ENCODE measurements at regions of chr7 and their contacts with region 1.

Region 1: GRCh38 chr7:143214789-143215679 is 6.8 kb upstream of the TAS2R40 start:
- DNase-seq: peak; percentile 67 to 79 (median 77)
- H3K4me3 ChIP-seq: no peak overlapping the region
- H3K4me3 Mint-ChIP-seq: no peak overlapping the region
- H3K27ac ChIP-seq: no peak overlapping the region
- H3K27ac Mint-ChIP-seq: no peak overlapping the region
- H3K4me1 ChIP-seq: no peaks in the 10 kb centered on the region
- H3K4me1 Mint-ChIP-seq: peaks cover 0 to 1% (median 0%) of the 10 kb centered on the region in 4 donors
- H3K27me3 ChIP-seq: no peaks in the 10 kb centered on the region
- H3K27me3 Mint-ChIP-seq: peaks cover 3% of the 10 kb centered on the region in 2 donors

Region 2: DNA sequence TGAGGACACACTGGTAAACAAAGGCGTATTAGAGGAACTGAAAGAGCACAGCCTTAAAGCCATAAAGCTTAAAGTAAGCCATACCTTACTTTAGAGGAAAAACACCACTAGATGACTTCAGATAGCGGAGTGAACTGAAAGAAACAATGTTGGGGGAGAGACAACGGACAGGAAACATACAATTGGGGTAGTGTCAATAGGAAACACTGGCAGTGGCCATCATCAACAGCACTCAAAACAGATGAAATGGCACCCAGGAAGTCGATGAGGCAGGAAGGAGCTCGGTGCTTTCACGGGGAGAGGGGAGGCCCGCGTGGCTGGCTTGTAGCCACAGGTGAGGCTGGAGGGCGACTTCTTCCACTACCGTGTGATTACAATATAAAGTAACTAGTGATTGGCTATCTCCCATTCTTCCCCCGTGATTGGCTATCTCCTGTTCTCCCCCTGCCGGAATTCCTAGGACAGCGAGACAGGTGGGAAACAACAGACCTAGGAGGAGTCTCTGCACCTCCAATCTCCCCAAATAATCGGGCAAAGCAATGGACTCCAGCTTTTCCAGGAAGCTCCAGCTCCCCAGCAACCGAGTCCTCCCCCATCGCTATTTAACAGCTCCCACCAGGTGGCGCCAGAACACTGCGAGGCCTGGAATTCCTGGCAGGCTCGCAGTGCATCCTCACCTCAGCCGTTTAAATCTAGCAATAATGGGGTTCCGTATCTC is 1239.1 kb before region 1 on chr7:
- CTCF ChIA-PET with region 1: interaction called, 13 read pairs
- POLR2A ChIA-PET with region 1: no interaction called
- intact Hi-C with region 1: loop called (anchors 1 kb)
- DNase-seq: peak; percentile 33 to 54 (median 51)
- H3K4me3 ChIP-seq: peak overlapping the region; percentile 24 to 49
- H3K4me3 Mint-ChIP-seq: peak overlapping the region; percentile 47 to 85 (median 81)
- H3K27ac ChIP-seq: no peak overlapping the region
- H3K27ac Mint-ChIP-seq: peak overlapping the region in 6 of 7 donors; percentile 0 to 86 (median 50)
- H3K4me1 ChIP-seq: peaks cover 9% of the 10 kb centered on the region
- H3K4me1 Mint-ChIP-seq: peaks cover 5 to 18% (median 9%) of the 10 kb centered on the region in 4 donors
- H3K27me3 ChIP-seq: no peaks in the 10 kb centered on the region
- H3K27me3 Mint-ChIP-seq: no peaks in the 10 kb centered on the region

Region 3: DNA sequence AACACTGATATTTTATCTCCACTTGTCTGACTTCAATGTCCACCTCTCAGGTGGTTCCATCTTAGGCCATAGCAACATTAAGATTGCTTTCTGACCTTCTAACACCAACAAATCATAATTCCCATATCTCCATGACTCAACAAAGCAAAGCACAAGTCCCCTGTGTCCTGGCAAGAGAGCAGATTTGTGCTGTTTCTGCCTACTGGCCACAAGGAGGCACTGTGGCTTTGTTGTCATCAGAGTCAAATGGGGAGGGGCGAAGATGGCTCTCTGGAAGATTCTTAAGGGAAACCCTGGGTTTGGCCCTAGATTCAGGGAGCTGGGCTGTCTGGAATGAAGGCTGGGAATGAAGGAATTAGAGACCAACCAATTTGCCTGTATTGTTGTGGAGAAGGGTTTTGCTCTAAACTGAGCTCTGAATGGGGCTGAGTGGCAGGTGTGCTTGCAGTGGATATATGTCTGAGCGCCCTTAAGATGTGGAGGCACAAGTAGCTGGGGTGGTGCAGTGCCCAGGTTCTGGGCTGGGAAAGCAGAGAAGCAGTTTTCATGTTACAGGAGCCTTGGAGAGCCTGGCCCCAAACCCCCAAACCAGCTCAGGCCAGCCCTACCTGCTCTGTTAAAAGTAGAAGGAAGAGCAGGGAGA is 802.4 kb before region 1 on chr7:
- CTCF ChIA-PET with region 1: interaction called, 3 read pairs
- POLR2A ChIA-PET with region 1: no interaction called
- intact Hi-C with region 1: loop called (anchors 1 kb)
- DNase-seq: peak; percentile 38 to 48 (median 41)
- H3K4me3 ChIP-seq: no peak overlapping the region
- H3K4me3 Mint-ChIP-seq: peak overlapping the region in 4 of 8 donors; percentile 8 to 36 (median 24)
- H3K27ac ChIP-seq: no peak overlapping the region
- H3K27ac Mint-ChIP-seq: peak overlapping the region in 4 of 7 donors; percentile 18 to 74 (median 28)
- H3K4me1 ChIP-seq: no peaks in the 10 kb centered on the region
- H3K4me1 Mint-ChIP-seq: peaks cover 1 to 6% (median 3%) of the 10 kb centered on the region in 4 donors
- H3K27me3 ChIP-seq: no peaks in the 10 kb centered on the region
- H3K27me3 Mint-ChIP-seq: no peaks in the 10 kb centered on the region

Region 4: DNA sequence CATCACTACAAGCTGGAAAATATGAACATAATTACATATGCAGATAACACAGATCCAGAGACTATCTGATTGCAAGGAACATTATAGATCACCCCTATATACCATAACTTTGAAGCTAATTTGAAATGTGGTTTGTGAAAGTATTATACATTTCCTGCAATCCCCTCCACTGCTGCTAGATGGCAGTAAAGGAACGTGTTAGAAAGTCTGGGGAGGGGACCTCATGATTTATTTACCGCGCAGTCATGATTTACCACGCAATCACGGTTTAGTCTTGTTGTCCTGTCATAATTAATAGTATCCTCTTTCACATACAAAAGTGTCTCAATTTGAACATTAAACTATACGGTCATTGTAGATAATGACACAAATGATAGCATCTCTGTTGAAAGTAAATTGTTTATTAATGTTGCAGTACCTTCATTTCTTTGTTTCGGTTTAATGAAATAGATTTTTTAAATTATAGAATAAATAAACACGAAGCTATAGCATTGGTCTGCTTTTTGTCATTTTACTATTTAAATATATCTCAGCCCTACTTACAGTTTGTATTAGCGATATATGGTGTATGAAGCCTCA is 611.1 kb before region 1 on chr7:
- CTCF ChIA-PET with region 1: interaction called, 5 read pairs
- POLR2A ChIA-PET with region 1: no interaction called
- intact Hi-C with region 1: loop called (anchors 1 kb)
- DNase-seq: peak; percentile 50 to 59 (median 53)
- H3K4me3 ChIP-seq: no peak overlapping the region
- H3K4me3 Mint-ChIP-seq: peak overlapping the region in 4 of 8 donors; percentile 11 to 58 (median 28)
- H3K27ac ChIP-seq: no peak overlapping the region
- H3K27ac Mint-ChIP-seq: peak overlapping the region in 3 of 7 donors; percentile 13 to 57 (median 24)
- H3K4me1 ChIP-seq: no peaks in the 10 kb centered on the region
- H3K4me1 Mint-ChIP-seq: peaks cover under 1 to 12% (median 5%) of the 10 kb centered on the region in 4 donors
- H3K27me3 ChIP-seq: no peaks in the 10 kb centered on the region
- H3K27me3 Mint-ChIP-seq: no peaks in the 10 kb centered on the region

Region 5: GRCh38 chr7:142880876-142881505 is 334.0 kb before region 1 on chr7:
- CTCF ChIA-PET with region 1: interaction called, 10 read pairs
- POLR2A ChIA-PET with region 1: no interaction called
- intact Hi-C with region 1: no loop called
- DNase-seq: peak; percentile 35 to 57 (median 55)
- H3K4me3 ChIP-seq: no peak overlapping the region
- H3K4me3 Mint-ChIP-seq: no peak overlapping the region
- H3K27ac ChIP-seq: no peak overlapping the region
- H3K27ac Mint-ChIP-seq: no peak overlapping the region
- H3K4me1 ChIP-seq: no peaks in the 10 kb centered on the region
- H3K4me1 Mint-ChIP-seq: peaks cover 0 to 4% (median 0%) of the 10 kb centered on the region in 4 donors
- H3K27me3 ChIP-seq: no peaks in the 10 kb centered on the region
- H3K27me3 Mint-ChIP-seq: peaks cover 2 to 8% of the 10 kb centered on the region in 2 donors

Region 6: GRCh38 chr7:143013893-143014292 is 201.1 kb before region 1 on chr7:
- CTCF ChIA-PET with region 1: interaction called, 291 read pairs
- POLR2A ChIA-PET with region 1: no interaction called
- intact Hi-C with region 1: no loop called
- DNase-seq: no peak
- H3K4me3 ChIP-seq: no peak overlapping the region
- H3K4me3 Mint-ChIP-seq: no peak overlapping the region
- H3K27ac ChIP-seq: no peak overlapping the region
- H3K27ac Mint-ChIP-seq: no peak overlapping the region
- H3K4me1 ChIP-seq: no peaks in the 10 kb centered on the region
- H3K4me1 Mint-ChIP-seq: no peaks in the 10 kb centered on the region
- H3K27me3 ChIP-seq: no peaks in the 10 kb centered on the region
- H3K27me3 Mint-ChIP-seq: peaks cover 15 to 22% of the 10 kb centered on the region in 2 donors

Region 7: GRCh38 chr7:143322760-143323633 is 108.0 kb after region 1 on chr7:
- CTCF ChIA-PET with region 1: no interaction called
- POLR2A ChIA-PET with region 1: no interaction called
- intact Hi-C with region 1: no loop called
- DNase-seq: no peak
- H3K4me3 ChIP-seq: no peak overlapping the region
- H3K4me3 Mint-ChIP-seq: no peak overlapping the region
- H3K27ac ChIP-seq: no peak overlapping the region
- H3K27ac Mint-ChIP-seq: no peak overlapping the region
- H3K4me1 ChIP-seq: no peaks in the 10 kb centered on the region
- H3K4me1 Mint-ChIP-seq: peaks cover 6 to 12% (median 9%) of the 10 kb centered on the region in 4 donors
- H3K27me3 ChIP-seq: no peaks in the 10 kb centered on the region
- H3K27me3 Mint-ChIP-seq: peaks cover 0 to 2% of the 10 kb centered on the region in 2 donors

Region 8: DNA sequence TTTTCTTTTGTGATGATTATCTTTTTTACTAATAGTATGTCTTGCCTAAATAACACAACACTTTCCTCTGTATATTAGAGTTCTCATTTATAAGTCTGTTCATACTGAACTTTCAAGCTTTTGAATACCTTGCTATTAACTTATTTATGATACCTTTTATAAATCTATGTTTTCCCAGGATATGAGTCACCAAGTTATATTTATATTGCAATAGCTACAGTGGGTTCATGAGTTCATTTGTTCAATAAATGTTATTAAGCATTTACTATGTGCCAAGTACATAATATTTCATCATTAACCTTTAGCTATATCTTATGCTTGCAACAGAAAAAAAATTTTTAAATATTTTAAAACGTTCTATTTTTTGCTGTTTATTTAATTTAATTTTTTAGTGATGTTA is 119.2 kb after region 1 on chr7:
- CTCF ChIA-PET with region 1: interaction called, 11 read pairs
- POLR2A ChIA-PET with region 1: no interaction called
- intact Hi-C with region 1: no loop called
- DNase-seq: no peak
- H3K4me3 ChIP-seq: no peak overlapping the region
- H3K4me3 Mint-ChIP-seq: no peak overlapping the region
- H3K27ac ChIP-seq: no peak overlapping the region
- H3K27ac Mint-ChIP-seq: no peak overlapping the region
- H3K4me1 ChIP-seq: no peaks in the 10 kb centered on the region
- H3K4me1 Mint-ChIP-seq: peaks cover 0 to 4% (median 0%) of the 10 kb centered on the region in 4 donors
- H3K27me3 ChIP-seq: no peaks in the 10 kb centered on the region
- H3K27me3 Mint-ChIP-seq: peaks cover 12 to 17% of the 10 kb centered on the region in 2 donors

Measured in CD4-positive, alpha-beta memory T cell (primary cell).